Right lobe of liver (tissue), 6 donors: ENCODE measurements at regions of chr3 and their contacts with region 1.

Region 1: DNA sequence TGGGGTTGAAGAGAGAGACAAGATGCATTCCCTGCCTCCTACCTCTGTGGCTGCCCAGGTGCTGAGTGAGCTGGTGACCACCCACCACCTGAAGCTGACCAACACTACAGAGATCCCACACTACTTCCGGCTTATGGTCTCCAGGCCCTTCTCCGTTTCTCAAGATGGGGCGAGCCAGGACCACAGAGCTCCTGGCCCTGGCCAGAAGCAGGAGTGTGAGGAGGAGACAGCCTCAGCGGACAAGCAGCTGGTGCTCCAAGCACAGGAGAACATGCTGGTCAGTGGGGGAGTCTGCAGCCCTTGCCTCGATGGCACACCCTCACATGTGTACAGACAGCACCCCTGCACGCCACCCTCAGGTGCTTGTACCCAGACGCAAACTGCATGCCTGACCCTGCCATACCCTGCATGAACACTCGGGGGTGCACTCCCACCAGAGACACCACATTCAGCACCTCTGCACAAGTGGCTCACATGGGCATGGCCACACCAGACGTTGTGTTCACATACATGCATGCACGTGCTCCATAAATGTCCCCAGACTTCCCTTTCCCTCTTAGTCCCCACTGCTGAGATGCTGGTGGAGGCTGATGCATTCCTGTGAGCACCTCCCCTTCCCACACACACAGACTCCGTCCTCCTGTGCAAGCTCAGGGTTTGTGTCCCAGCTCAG is 19.0 kb downstream of the ACAA1 start:
- DNase-seq: peak; percentile 72 to 85 (median 84)
- ATAC-seq: peak; percentile 73 to 81 (median 81)
- H3K4me3 ChIP-seq: no peak overlapping the region
- H3K27ac ChIP-seq: peak overlapping the region in 2 of 3 donors; percentile 7 to 43
- H3K4me1 ChIP-seq: peaks cover 0 to 37% (median 13%) of the 10 kb centered on the region in 4 donors
- H3K27me3 ChIP-seq: no peaks in the 10 kb centered on the region
- CTCF ChIP-seq: peak; percentile 64 to 88 (median 72)
- POLR2A ChIP-seq: no peak

Region 2: DNA sequence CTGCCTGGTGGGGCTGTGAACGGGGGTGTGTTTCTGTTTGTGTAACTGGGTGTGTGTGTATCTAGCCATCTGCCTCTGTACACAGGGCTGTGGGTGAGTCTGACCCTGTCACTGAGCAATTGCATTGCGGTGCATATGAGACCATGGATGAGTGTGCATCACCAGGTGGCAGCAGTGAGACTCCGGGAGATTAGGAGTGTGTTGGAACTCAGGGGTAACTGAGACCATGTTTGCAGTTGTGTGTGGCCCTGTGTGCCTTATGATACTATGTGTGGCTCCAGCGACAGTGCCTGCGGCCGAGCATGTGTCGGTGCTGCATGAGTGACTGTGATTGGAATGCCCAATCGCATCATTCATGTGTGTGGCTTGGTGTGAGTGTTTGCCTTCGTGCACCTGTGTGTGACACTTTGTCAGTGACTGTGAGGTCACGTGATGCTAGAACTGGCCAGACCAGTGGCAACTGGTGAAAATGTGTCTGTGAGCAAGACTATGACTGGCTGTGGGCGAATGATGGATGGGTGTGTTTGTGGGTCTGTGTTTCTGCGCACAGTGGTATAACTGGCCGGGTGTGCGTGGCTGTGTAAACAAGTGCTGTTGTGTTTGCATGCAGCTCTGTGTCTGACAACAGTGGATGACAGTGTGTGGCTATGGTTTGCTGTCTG is 113.3 kb before region 1 on chr3:
- intact Hi-C with region 1: loop called (anchors 10 kb)
- DNase-seq: peak; percentile 79 to 82 (median 81)
- ATAC-seq: peak; percentile 80 to 89 (median 82)
- H3K4me3 ChIP-seq: no peak overlapping the region
- H3K27ac ChIP-seq: no peak overlapping the region
- H3K4me1 ChIP-seq: no peaks in the 10 kb centered on the region
- H3K27me3 ChIP-seq: no peaks in the 10 kb centered on the region
- CTCF ChIP-seq: peak; percentile 64 to 79 (median 75)
- POLR2A ChIP-seq: no peak